Natural killer cell (primary cell): ENCODE measurements at regions of chr22 and their contacts with region 1.

Region 1: GRCh38 chr22:22959147-22959827 is 71.7 kb downstream of the IGLL5 start:
- DNase-seq: peak; percentile 74 to 89
- ATAC-seq: peak; percentile 56 to 79 (median 72)
- H3K4me3 ChIP-seq: no peak overlapping the region
- H3K4me3 Mint-ChIP-seq: no peak overlapping the region
- H3K27ac ChIP-seq: no peak overlapping the region
- H3K27ac Mint-ChIP-seq: no peak overlapping the region
- H3K4me1 ChIP-seq: peaks cover 5% of the 10 kb centered on the region
- H3K4me1 Mint-ChIP-seq: peaks cover 5 to 9% of the 10 kb centered on the region in 2 donors
- H3K27me3 ChIP-seq: no peaks in the 10 kb centered on the region
- H3K27me3 Mint-ChIP-seq: peaks cover 19 to 39% of the 10 kb centered on the region in 2 donors
- CTCF ChIP-seq: peak; percentile 99

Region 2: DNA sequence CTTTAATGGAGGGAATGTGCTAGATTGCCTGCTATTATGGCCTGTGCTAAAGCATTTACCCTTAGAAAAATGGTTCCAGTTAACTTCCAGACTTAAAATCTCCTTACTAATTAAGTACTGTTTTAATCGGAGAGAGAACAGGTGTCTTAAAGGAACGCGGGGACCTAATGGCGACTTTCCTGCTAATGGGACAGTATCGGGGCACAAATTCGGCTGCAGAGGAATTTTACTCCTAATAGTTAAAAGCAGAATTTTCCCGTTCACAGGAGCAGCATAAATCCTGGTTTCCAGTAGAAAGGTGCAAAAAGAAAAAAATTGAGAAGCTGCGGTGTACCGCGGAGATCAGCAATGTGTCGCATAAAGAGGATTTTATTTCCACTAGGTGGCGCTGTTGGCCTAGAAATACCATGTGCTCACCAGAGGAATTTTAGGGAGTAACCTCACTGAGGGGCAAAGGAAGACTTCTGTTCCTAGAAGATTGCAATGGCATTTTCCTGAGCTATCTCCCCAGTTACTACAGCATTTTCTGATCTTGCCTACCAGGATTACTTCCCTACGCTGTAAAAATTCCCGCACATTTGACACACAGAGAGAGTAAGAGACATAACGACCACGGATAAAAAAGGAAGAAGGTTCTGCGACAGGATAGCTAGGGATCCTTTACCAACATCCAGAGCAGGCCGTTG is 495.3 kb before region 1 on chr22:
- intact Hi-C with region 1: loop called (anchors 10 kb)
- DNase-seq: peak in 1 of 2 donors; percentile 80
- ATAC-seq: peak in 1 of 3 donors; percentile 55
- H3K4me3 ChIP-seq: no peak overlapping the region
- H3K4me3 Mint-ChIP-seq: no peak overlapping the region
- H3K27ac ChIP-seq: no peak overlapping the region
- H3K27ac Mint-ChIP-seq: no peak overlapping the region
- H3K4me1 ChIP-seq: no peaks in the 10 kb centered on the region
- H3K4me1 Mint-ChIP-seq: peaks cover 4 to 5% of the 10 kb centered on the region in 2 donors
- H3K27me3 ChIP-seq: peaks cover 11% of the 10 kb centered on the region
- H3K27me3 Mint-ChIP-seq: peaks cover 28 to 58% of the 10 kb centered on the region in 2 donors
- CTCF ChIP-seq: peak; percentile 68

Region 3: GRCh38 chr22:22593964-22594656 is 365.2 kb before region 1 on chr22:
- intact Hi-C with region 1: loop called (anchors 1 kb)
- DNase-seq: peak; percentile 50 to 80
- ATAC-seq: peak; percentile 67 to 88 (median 82)
- H3K4me3 ChIP-seq: no peak overlapping the region
- H3K4me3 Mint-ChIP-seq: no peak overlapping the region
- H3K27ac ChIP-seq: no peak overlapping the region
- H3K27ac Mint-ChIP-seq: no peak overlapping the region
- H3K4me1 ChIP-seq: no peaks in the 10 kb centered on the region
- H3K4me1 Mint-ChIP-seq: peaks cover 6% of the 10 kb centered on the region in 2 donors
- H3K27me3 ChIP-seq: no peaks in the 10 kb centered on the region
- H3K27me3 Mint-ChIP-seq: peaks cover 0 to 4% of the 10 kb centered on the region in 2 donors
- CTCF ChIP-seq: peak; percentile 76

Region 4: GRCh38 chr22:22748297-22748743 is 211.0 kb before region 1 on chr22:
- intact Hi-C with region 1: loop called (anchors 1 kb)
- DNase-seq: peak; percentile 31 to 77
- ATAC-seq: peak in 2 of 3 donors; percentile 65 to 80
- H3K4me3 ChIP-seq: no peak overlapping the region
- H3K4me3 Mint-ChIP-seq: peak overlapping the region; percentile 75
- H3K27ac ChIP-seq: no peak overlapping the region
- H3K27ac Mint-ChIP-seq: peak overlapping the region; percentile 75 to 82
- H3K4me1 ChIP-seq: peaks cover 50% of the 10 kb centered on the region
- H3K4me1 Mint-ChIP-seq: peaks cover 54 to 56% of the 10 kb centered on the region in 2 donors
- H3K27me3 ChIP-seq: no peaks in the 10 kb centered on the region
- H3K27me3 Mint-ChIP-seq: peaks cover 0 to 2% of the 10 kb centered on the region in 2 donors
- CTCF ChIP-seq: peak; percentile 84

Region 5: DNA sequence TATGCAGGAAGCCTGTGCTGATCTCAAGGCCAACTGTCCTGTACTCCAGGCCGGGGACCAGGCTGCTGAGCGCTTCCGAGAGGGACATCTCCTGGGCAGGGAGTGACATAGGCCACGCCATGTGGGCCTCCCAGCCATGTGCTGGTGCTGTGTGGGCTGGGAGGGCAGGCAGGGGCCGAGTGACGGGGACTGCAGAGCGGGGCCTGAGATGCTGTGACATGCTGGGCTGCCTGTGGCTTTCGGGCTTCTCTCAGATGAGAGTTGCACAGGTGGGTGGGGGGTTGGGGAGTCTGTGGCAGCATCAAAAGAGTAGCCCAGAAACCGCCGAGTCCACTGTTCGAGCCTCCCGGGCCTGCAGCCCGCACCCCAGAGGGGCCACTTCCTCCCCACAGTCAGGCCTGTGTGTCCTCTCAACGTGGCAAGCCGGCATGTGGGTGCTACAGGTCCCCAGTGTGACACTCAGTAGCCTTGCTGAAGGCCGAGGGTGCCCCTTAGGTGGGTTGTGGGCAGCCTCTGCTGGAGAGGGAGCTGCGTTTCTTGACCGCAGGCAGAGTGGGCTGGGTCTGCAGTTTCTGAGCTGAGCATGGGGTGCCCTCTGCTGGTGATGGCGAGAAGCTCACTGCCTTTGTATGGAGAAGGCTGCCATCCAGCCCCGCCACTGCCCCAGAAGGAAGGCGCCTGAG is 322.3 kb after region 1 on chr22:
- intact Hi-C with region 1: loop called (anchors 5 kb)
- DNase-seq: peak; percentile 86 to 90
- ATAC-seq: peak; percentile 69 to 82 (median 72)
- H3K4me3 ChIP-seq: no peak overlapping the region
- H3K4me3 Mint-ChIP-seq: peak overlapping the region; percentile 4
- H3K27ac ChIP-seq: peak overlapping the region; percentile 38
- H3K27ac Mint-ChIP-seq: peak overlapping the region; percentile 82 to 87
- H3K4me1 ChIP-seq: peaks cover 60% of the 10 kb centered on the region
- H3K4me1 Mint-ChIP-seq: peaks cover 32 to 52% of the 10 kb centered on the region in 2 donors
- H3K27me3 ChIP-seq: no peaks in the 10 kb centered on the region
- H3K27me3 Mint-ChIP-seq: no peaks in the 10 kb centered on the region
- CTCF ChIP-seq: peak; percentile 98

Region 6: GRCh38 chr22:23357053-23357452 is 397.8 kb after region 1 on chr22:
- intact Hi-C with region 1: no loop called
- DNase-seq: no peak
- ATAC-seq: no peak
- H3K4me3 ChIP-seq: no peak overlapping the region
- H3K4me3 Mint-ChIP-seq: no peak overlapping the region
- H3K27ac ChIP-seq: no peak overlapping the region
- H3K27ac Mint-ChIP-seq: no peak overlapping the region
- H3K4me1 ChIP-seq: no peaks in the 10 kb centered on the region
- H3K4me1 Mint-ChIP-seq: peaks cover 0 to 5% of the 10 kb centered on the region in 2 donors
- H3K27me3 ChIP-seq: no peaks in the 10 kb centered on the region
- H3K27me3 Mint-ChIP-seq: peaks cover 7 to 8% of the 10 kb centered on the region in 2 donors
- CTCF ChIP-seq: no peak

Region 7: DNA sequence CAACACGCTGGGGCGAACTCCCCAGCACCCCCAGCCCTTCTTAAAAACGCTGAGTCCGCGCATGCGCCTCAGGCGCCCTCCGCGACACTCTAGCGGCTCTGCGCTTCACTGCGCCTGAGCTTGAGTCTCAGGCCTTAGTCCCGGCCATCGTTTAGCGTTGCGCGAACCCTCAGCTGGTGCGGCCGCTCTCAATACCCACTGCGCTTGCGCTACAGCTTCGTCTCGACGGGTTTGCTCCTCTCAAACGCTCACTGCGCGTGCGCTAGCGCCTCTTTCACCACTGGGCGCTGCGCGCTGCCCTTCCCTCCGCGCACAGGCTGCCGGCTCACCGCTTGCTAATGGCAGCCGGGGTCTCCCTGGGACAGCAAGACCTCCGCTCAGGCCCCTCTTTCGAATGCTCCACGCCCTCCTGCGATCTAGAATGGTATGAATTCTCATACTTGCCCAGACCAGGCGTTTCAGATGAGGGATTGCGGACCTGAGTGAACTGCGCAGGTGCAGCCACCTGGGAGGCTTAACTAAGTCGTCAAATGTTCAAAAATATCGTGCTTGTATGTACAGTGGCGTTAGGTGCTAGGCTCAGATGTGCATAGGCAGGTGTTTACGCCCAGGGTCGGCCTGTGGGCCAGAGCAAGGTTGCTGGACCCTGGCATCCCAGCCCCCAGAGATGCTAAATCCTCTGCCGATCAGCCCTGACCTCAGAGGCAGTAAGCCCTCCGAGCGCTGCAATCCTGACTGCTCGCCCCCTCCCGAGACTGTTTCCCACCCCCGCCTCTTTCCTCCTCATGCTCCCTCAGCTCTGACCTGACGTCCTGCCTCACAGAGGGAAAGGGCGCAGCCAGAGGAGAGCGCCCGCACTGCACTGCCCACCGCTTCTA is 898.6 kb after region 1 on chr22 and contains the start of gene SLC2A11:
- intact Hi-C with region 1: loop called (anchors 10 kb)
- DNase-seq: peak; percentile 89 to 98
- ATAC-seq: peak; percentile 94 to 98 (median 96)
- H3K4me3 ChIP-seq: peak within 1 kb of the TSS; percentile 77
- H3K4me3 Mint-ChIP-seq: peak within 1 kb of the TSS; percentile 94
- H3K27ac ChIP-seq: peak within 1 kb of the TSS; percentile 84
- H3K27ac Mint-ChIP-seq: peak within 1 kb of the TSS; percentile 87 to 93
- H3K4me1 ChIP-seq: peaks cover 22% of the 10 kb centered on the region
- H3K4me1 Mint-ChIP-seq: peaks cover 21 to 23% of the 10 kb centered on the region in 2 donors
- H3K27me3 ChIP-seq: no peaks in the 10 kb centered on the region
- H3K27me3 Mint-ChIP-seq: no peaks in the 10 kb centered on the region
- CTCF ChIP-seq: no peak
- total RNA-seq, gene SLC2A11: 9.2 to 14.1 (median 11.8) TPM